ENCODE measurements at regions of chr16 and their contacts with region 1.

Region 1: DNA sequence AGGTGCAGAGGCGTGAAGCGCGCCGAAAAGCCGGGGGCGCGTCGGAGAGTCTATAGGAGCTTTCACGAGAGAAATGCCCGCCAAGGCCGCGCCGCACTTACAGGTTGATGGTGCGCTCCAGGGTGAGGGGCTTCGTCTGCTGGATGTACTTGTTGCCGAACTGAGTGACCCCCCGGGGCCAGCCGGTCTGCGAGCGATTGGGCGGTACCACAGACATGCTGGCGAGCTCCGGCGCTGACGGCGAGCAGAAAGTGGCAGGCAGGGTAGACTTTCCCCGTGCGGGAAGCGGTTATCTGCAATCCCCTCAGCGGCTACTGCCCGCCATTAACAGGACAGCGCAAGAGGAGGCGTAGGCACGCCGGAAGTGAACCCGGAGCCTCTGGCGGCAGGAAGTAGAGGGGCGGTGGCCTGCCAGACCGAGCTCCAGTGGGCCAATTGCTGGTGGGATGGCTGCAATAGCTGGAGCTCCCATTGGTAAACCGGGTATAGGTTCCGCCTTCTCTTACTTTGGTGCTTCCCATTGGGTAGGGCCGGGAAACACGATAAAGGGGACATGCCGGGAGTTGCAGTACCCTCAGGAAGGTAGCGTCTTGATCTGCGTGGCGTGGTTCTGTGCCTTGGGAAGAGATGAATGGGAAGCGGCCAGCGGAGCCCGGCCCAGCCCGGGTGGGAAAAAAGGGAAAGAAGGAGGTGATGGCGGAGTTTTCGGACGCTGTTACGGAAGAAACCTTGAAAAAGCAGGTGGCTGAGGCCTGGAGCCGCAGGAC is at the starts of genes NUDT21 and OGFOD1:
- DNase-seq: peak; percentile 99
- ATAC-seq: peak; percentile 98
- H3K4me3 ChIP-seq: peak within 1 kb of the TSS; percentile 93 to 97 (median 96)
- H3K27ac ChIP-seq: peak within 1 kb of the TSS; percentile 87
- H3K4me1 ChIP-seq: peaks cover 48% of the 10 kb centered on the region
- H3K27me3 ChIP-seq: no peaks in the 10 kb centered on the region; a peak in 1 of 5 replicates
- CTCF ChIP-seq: no peak; the same call in 1 of the 2 replicates
- EP300 ChIP-seq: no peak
- POLR2A ChIP-seq: peak; percentile 84 to 91
- RAD21 ChIP-seq: 0 out of 2 replicates have a peak, but pooled peaks have one; percentile 20
- total RNA-seq, gene NUDT21: 210 and 320 TPM in 2 replicates
- total RNA-seq, gene OGFOD1: 81.3 and 160 TPM in 2 replicates

Region 2: DNA sequence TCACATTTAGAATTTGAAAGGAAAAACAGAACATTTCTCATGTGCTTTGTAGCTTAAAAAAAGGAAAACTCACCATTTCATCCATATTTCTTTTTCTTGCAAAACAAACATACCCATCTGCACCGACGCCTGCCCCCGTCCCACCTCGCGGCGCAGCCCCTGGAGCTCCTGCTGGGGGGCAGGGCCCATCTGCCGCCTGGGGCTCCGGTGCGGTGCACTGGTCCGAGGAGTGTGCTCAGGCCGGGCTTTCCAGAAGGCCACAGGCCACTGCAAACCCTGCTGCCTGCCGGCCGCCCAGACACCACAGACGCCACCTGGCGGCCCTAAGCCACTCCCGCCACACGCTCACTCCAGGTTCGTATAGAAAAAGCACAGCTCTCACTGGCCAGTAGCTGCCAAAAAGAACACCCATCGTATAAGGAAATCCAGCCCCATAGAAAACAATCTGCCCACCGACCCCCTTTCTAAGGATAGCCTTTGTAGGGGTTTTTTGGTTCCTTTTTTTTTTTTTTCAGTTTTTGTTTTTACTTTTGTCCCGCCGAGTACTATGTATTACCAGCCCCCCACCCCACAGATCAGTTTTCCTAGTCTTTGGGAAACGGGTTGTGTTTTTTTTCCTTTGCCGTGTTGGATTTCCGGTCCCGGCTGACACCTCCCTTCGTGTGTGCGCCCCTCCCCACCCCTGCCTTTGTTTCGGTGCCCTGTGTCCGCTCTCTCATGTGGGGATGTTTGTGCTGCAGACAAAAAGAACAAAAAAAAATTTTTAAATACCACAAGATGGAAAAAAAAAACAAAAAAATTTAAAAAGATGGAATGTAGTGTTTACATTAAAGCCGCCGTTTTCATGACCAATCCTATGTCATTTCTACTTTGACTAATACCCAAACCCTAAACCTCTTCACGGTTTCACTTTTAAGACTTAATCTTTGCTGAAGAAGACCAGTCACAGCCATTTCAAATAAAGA is 94.6 kb before region 1 on chr16:
- CTCF ChIA-PET with region 1: no interaction called
- POLR2A ChIA-PET with region 1: interaction called, 11 read pairs
- in situ Hi-C with region 1: no loop called
- intact Hi-C with region 1: no loop called
- DNase-seq: peak; percentile 84
- ATAC-seq: peak; percentile 92
- H3K4me3 ChIP-seq: peak overlapping the region; percentile 55 to 77 (median 66)
- H3K27ac ChIP-seq: no peak overlapping the region
- H3K4me1 ChIP-seq: peaks cover 21% of the 10 kb centered on the region
- H3K27me3 ChIP-seq: peaks cover 2 to 4% of the 10 kb centered on the region in 2 experiments; a peak in 4 of 5 replicates
- CTCF ChIP-seq: peak; percentile 97
- EP300 ChIP-seq: no peak
- POLR2A ChIP-seq: no peak; a peak in 1 of 4 replicates
- RAD21 ChIP-seq: peak; percentile 94

Region 3: DNA sequence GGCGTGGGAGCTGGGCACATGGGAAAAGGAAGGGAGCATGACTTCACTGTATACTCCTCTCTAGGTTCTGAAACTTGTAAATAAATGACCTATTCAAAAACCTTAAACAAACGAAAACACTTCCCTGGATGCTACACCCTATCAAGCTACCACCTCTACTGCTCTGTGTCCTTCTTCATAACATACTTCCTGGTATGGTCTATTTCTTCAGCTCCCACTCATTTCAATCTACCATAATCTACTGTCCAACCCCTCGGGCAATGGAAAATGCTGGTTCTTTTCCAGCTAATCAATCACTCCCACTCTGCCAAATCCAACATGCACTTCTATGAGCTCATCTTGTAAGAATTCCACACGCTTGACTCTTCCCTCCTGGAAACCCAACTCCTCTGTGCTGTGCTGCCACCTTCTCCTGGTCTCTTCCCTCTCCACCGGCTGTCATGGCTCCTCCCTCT is 68.2 kb before region 1 on chr16:
- CTCF ChIA-PET with region 1: no interaction called
- POLR2A ChIA-PET with region 1: interaction called, 6 read pairs
- in situ Hi-C with region 1: no loop called
- intact Hi-C with region 1: loop called (anchors 5 kb)
- DNase-seq: peak; percentile 56
- ATAC-seq: peak; percentile 79
- H3K4me3 ChIP-seq: no peak overlapping the region
- H3K27ac ChIP-seq: peak overlapping the region; percentile 38
- H3K4me1 ChIP-seq: peaks cover 29% of the 10 kb centered on the region
- H3K27me3 ChIP-seq: no peaks in the 10 kb centered on the region
- CTCF ChIP-seq: no peak
- EP300 ChIP-seq: no peak
- POLR2A ChIP-seq: no peak
- RAD21 ChIP-seq: no peak

Region 4: DNA sequence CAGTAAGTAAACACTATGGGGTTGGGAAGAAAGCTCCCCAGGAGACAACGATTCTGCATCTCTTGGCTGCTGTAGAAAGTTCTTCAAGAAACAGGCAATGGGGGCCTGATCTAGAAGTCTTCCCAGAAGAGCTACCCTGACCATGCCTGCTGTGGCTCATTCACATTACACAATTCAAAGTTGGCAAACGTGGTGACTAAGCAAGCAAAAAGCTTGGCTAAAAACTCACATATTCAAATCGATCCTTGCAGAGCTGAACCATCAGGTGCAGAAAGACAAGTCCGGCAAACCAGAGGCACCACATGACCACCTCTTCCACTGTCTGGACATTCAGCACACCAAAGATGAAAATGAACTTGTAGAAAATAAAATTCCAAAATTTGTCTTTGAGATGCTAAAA is 42.0 kb before region 1 on chr16:
- CTCF ChIA-PET with region 1: no interaction called
- POLR2A ChIA-PET with region 1: interaction called, 27 read pairs
- in situ Hi-C with region 1: no loop called
- intact Hi-C with region 1: loop called (anchors 5 kb)
- DNase-seq: peak; percentile 61
- ATAC-seq: peak; percentile 80
- H3K4me3 ChIP-seq: no peak overlapping the region
- H3K27ac ChIP-seq: peak overlapping the region; percentile 72
- H3K4me1 ChIP-seq: peaks cover 24% of the 10 kb centered on the region
- H3K27me3 ChIP-seq: no peaks in the 10 kb centered on the region
- CTCF ChIP-seq: no peak
- EP300 ChIP-seq: no peak
- POLR2A ChIP-seq: no peak
- RAD21 ChIP-seq: no peak

Region 5: DNA sequence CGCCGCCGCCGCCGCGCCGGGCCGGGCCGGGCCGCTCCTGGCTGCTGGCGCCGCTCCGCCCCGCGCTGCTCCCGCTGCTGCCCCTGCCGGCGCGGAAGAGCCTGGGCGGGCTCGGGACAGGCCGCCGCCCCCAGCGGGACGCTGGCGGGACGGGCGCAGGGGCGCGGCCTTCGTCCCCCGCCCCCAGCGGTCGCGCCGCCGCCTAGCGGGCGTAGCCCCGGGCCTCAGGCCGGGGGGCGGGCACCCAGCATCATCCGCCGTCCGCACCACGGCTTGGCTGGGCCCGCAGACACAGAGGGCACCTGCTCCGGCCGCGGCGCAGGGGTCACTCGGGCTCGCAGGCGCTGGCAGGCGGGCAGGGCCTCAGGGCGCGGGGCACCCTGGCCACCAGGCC is 25.7 kb before region 1 on chr16 and contains the start of gene AMFR:
- CTCF ChIA-PET with region 1: no interaction called
- POLR2A ChIA-PET with region 1: interaction called, 16 read pairs
- in situ Hi-C with region 1: no loop called
- intact Hi-C with region 1: loop called (anchors 2 kb)
- DNase-seq: peak; percentile 74
- ATAC-seq: peak; percentile 94
- H3K4me3 ChIP-seq: peak within 1 kb of the TSS; percentile 78 to 90 (median 89)
- H3K27ac ChIP-seq: peak within 1 kb of the TSS; percentile 68
- H3K4me1 ChIP-seq: peaks cover 50% of the 10 kb centered on the region
- H3K27me3 ChIP-seq: no peaks in the 10 kb centered on the region; a peak in 2 of 5 replicates
- CTCF ChIP-seq: peak; percentile 62
- EP300 ChIP-seq: no peak
- POLR2A ChIP-seq: no peak; a peak in 1 of 4 replicates
- RAD21 ChIP-seq: peak; percentile 82
- total RNA-seq, gene AMFR: 80.0 and 108 TPM in 2 replicates

Region 6: DNA sequence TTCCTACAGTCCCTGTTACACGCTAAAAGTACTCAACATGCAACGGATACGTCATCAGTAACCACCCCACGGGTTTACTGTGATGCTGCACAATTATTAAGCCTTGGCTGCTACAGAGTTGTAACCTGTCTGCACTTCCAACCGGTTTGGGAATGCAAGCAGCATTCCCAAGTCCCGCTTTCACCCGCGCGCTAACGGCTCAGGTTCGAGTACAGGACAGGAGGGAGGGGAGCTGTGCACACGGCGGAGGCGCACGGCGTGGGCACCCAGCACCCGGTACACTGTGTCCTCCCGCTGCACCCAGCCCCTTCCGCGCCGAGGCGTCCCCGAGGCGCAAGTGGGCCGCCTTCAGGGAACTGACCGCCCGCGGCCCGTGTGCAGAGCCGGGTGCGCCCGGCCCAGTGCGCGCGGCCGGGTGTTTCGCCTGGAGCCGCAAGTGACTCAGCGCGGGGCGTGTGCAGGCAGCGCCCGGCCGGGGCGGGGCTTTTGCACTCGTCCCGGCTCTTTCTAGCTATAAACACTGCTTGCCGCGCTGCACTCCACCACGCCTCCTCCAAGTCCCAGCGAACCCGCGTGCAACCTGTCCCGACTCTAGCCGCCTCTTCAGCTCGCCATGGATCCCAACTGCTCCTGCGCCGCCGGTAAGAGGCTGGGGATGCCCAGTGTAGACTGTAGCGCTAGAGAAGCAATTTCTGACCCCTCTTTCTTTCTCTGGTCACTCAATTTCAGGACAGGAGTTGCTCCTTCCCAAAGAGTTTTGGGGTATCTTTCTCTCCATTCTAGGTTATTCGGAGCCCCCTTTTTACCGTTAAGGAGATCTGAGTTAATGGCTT is 157.1 kb after region 1 on chr16 and contains the start of gene MT2A:
- CTCF ChIA-PET with region 1: no interaction called
- POLR2A ChIA-PET with region 1: interaction called, 11 read pairs
- in situ Hi-C with region 1: no loop called
- intact Hi-C with region 1: no loop called
- DNase-seq: peak; percentile 94
- ATAC-seq: peak; percentile 76
- H3K4me3 ChIP-seq: peak within 1 kb of the TSS; percentile 75 to 84 (median 78)
- H3K27ac ChIP-seq: peak within 1 kb of the TSS; percentile 93
- H3K4me1 ChIP-seq: peaks cover 72% of the 10 kb centered on the region
- H3K27me3 ChIP-seq: no peaks in the 10 kb centered on the region; a peak in 1 of 5 replicates
- CTCF ChIP-seq: peak; percentile 23
- EP300 ChIP-seq: peak in 1 of 2 experiments; percentile 22; a peak in 2 of 4 replicates
- POLR2A ChIP-seq: peak; percentile 87 to 89
- RAD21 ChIP-seq: peak; percentile 73
- total RNA-seq, gene MT2A: 371 and 409 TPM in 2 replicates

Measured in HepG2 (cell line).